CD8-positive, alpha-beta T cell (primary cell): ENCODE measurements at regions of chr12 and their contacts with region 1.

Region 1: DNA sequence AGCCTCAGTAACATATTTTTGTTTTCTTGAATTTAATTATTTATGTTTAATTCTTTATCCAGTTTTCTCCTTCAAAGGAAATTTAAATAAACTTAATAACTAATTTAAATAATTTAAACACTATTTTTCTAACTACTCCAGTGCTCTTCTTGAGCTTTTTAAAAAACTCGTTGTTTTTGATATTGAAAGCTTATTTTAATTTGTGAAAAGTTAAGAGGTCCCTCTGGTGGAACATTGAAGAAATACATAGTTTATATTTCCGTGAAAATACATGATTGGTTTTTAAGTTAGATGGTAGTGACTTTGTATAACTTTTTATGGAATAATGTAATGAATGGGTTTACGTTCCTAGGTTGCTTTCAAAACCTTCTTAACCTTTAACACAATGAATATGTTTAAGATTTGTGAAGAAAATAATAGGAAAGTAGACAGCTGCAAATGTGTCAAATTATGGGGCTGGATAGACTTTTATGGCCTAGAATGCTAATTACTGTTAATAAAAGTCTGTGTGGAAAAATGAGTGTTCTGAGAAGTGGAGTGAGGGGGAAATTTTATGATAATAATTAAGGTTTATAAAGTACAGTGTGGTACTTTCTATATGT is 45.9 kb upstream of the MSRB3 start:
- DNase-seq: peak in 2 of 9 experiments; percentile 28 to 53
- ATAC-seq: peak; percentile 40
- H3K4me3 ChIP-seq: no peak overlapping the region
- H3K4me3 Mint-ChIP-seq: peak overlapping the region; percentile 40
- H3K27ac ChIP-seq: no peak overlapping the region
- H3K27ac Mint-ChIP-seq: no peak overlapping the region
- H3K4me1 ChIP-seq: peaks cover 4% of the 10 kb centered on the region
- H3K4me1 Mint-ChIP-seq: peaks cover 13% of the 10 kb centered on the region
- H3K27me3 ChIP-seq: no peaks in the 10 kb centered on the region
- H3K27me3 Mint-ChIP-seq: no peaks in the 10 kb centered on the region
- CTCF ChIP-seq: peak; percentile 69

Region 2: GRCh38 chr12:65121049-65121955 is 111.3 kb before region 1 on chr12 and contains the start of gene WIF1:
- CTCF ChIA-PET with region 1: interaction called, 3 read pairs
- POLR2A ChIA-PET with region 1: no interaction called
- intact Hi-C with region 1: loop called (anchors 1 to 5 kb)
- DNase-seq: peak in 3 of 9 experiments; percentile 12 to 33 (median 26)
- ATAC-seq: peak; percentile 62
- H3K4me3 ChIP-seq: peak within 1 kb of the TSS; percentile 9 to 49
- H3K4me3 Mint-ChIP-seq: peak within 1 kb of the TSS; percentile 51
- H3K27ac ChIP-seq: no peak within 1 kb of the TSS
- H3K27ac Mint-ChIP-seq: no peak within 1 kb of the TSS
- H3K4me1 ChIP-seq: peaks cover 6% of the 10 kb centered on the region
- H3K4me1 Mint-ChIP-seq: peaks cover 11% of the 10 kb centered on the region
- H3K27me3 ChIP-seq: peaks cover 15 to 21% of the 10 kb centered on the region in 2 experiments
- H3K27me3 Mint-ChIP-seq: peaks cover 50% of the 10 kb centered on the region
- CTCF ChIP-seq: peak; percentile 27
- total RNA-seq, gene WIF1: not detected

Region 3: GRCh38 chr12:65392491-65392890 is 159.9 kb after region 1 on chr12:
- CTCF ChIA-PET with region 1: no interaction called
- POLR2A ChIA-PET with region 1: no interaction called
- intact Hi-C with region 1: no loop called
- DNase-seq: no peak
- ATAC-seq: no peak
- H3K4me3 ChIP-seq: no peak overlapping the region
- H3K4me3 Mint-ChIP-seq: no peak overlapping the region
- H3K27ac ChIP-seq: no peak overlapping the region
- H3K27ac Mint-ChIP-seq: no peak overlapping the region
- H3K4me1 ChIP-seq: no peaks in the 10 kb centered on the region
- H3K4me1 Mint-ChIP-seq: no peaks in the 10 kb centered on the region
- H3K27me3 ChIP-seq: no peaks in the 10 kb centered on the region
- H3K27me3 Mint-ChIP-seq: no peaks in the 10 kb centered on the region
- CTCF ChIP-seq: no peak

Region 4: GRCh38 chr12:66107451-66107915 is 874.9 kb after region 1 on chr12:
- CTCF ChIA-PET with region 1: no interaction called
- POLR2A ChIA-PET with region 1: no interaction called
- intact Hi-C with region 1: loop called in 1 of 2 experiments (anchors 2 kb)
- DNase-seq: peak in 8 of 9 experiments; percentile 3 to 81 (median 38)
- ATAC-seq: peak; percentile 81
- H3K4me3 ChIP-seq: no peak overlapping the region
- H3K4me3 Mint-ChIP-seq: no peak overlapping the region
- H3K27ac ChIP-seq: no peak overlapping the region
- H3K27ac Mint-ChIP-seq: no peak overlapping the region
- H3K4me1 ChIP-seq: no peaks in the 10 kb centered on the region
- H3K4me1 Mint-ChIP-seq: peaks cover 3% of the 10 kb centered on the region
- H3K27me3 ChIP-seq: no peaks in the 10 kb centered on the region
- H3K27me3 Mint-ChIP-seq: peaks cover 6% of the 10 kb centered on the region
- CTCF ChIP-seq: peak; percentile 74